SK-N-SH (cell line): ENCODE measurements at regions of chr7 and their contacts with region 1.

Region 1: DNA sequence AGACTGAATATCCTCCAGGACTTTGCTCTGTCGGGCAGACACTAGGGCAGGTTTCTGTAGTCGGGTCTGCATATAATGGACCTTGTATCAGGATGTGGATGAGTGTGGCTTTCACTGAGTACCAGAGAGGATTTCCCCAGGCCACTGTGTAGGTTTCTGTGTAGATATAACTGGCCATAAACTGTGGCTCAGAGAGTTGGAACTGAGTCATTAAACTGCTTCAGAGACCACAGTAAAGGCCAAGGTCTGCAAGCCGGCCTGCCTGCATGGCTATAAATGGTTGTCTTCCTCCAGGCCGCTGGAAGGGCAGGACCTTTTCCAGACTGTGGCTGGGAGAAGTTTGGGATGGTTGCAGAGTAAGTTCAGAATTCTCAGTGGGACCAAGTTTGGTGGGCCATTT is 16.9 kb downstream of the ZNF92 start:
- DNase-seq: no peak
- H3K4me3 ChIP-seq: no peak overlapping the region
- H3K27ac ChIP-seq: no peak overlapping the region
- H3K4me1 ChIP-seq: no peaks in the 10 kb centered on the region; a peak in 1 of 4 replicates
- H3K27me3 ChIP-seq: no peaks in the 10 kb centered on the region
- CTCF ChIP-seq: no peak
- EP300 ChIP-seq: no peak
- RAD21 ChIP-seq: no peak

Region 2: GRCh38 chr7:65373608-65374351 is 16.8 kb before region 1 on chr7 and contains the start of gene ZNF92:
- CTCF ChIA-PET with region 1: interaction called, 13 read pairs
- POLR2A ChIA-PET with region 1: interaction called, 4 read pairs
- DNase-seq: peak; percentile 95
- H3K4me3 ChIP-seq: peak within 1 kb of the TSS; percentile 85 to 97
- H3K27ac ChIP-seq: peak within 1 kb of the TSS; percentile 89 to 92
- H3K4me1 ChIP-seq: peaks cover 7 to 10% of the 10 kb centered on the region in 2 experiments
- H3K27me3 ChIP-seq: no peaks in the 10 kb centered on the region
- CTCF ChIP-seq: no peak
- EP300 ChIP-seq: no peak
- RAD21 ChIP-seq: 0 out of 2 replicates have a peak, but pooled peaks have one; percentile 6
- polyA plus RNA-seq, gene ZNF92: 1.6 and 2.2 TPM in 2 replicates

Region 3: GRCh38 chr7:65404020-65404419 is 13.4 kb after region 1 on chr7:
- CTCF ChIA-PET with region 1: no interaction called
- POLR2A ChIA-PET with region 1: no interaction called
- DNase-seq: no peak
- H3K4me3 ChIP-seq: no peak overlapping the region
- H3K27ac ChIP-seq: no peak overlapping the region
- H3K4me1 ChIP-seq: no peaks in the 10 kb centered on the region
- H3K27me3 ChIP-seq: no peaks in the 10 kb centered on the region
- CTCF ChIP-seq: no peak
- EP300 ChIP-seq: no peak
- RAD21 ChIP-seq: no peak